Left cardiac atrium (tissue), 4 donors: ENCODE measurements at regions of chr3 and their contacts with region 1.

Region 1: DNA sequence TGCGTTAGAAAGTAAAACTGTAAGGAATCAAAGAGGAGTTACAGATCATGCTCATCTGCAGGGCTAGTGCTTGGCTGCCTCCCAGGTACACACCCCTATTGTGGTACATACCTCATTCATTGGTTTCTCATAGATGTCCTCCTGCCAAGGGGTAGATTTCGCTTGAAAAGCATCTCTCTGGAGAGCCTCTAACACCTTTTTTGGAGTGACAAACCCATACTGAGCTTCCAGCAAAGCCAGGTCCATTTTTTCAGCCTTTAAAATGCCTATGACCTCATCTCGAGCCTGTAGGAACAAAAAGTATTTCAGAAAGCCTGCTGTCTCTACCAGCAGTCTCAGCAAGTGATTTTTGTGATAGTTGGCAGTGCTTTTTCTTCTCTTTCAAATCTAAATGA is 112.1 kb downstream of the CMSS1 start:
- DNase-seq: peak; percentile 52
- ATAC-seq: peak; percentile 51 to 84

Region 2: GRCh38 chr3:99602183-99602582 is 327.6 kb before region 1 on chr3:
- intact Hi-C with region 1: no loop called
- DNase-seq: no peak
- ATAC-seq: no peak

Region 3: GRCh38 chr3:99875929-99876841 is 53.6 kb before region 1 on chr3:
- intact Hi-C with region 1: loop called in 1 of 2 experiments (anchors 5 kb)
- DNase-seq: peak; percentile 87
- ATAC-seq: peak; percentile 95 to 97